Heart left ventricle (tissue), 16 donors: ENCODE measurements at regions of chr1 and their contacts with region 1.

Region 1: GRCh38 chr1:184494929-184495328 is 108.1 kb downstream of the C1orf21 start:
- DNase-seq: no peak
- ATAC-seq: no peak
- H3K4me3 ChIP-seq: no peak overlapping the region
- H3K27ac ChIP-seq: peak overlapping the region in 9 of 12 donors; percentile 65 to 88 (median 83)
- H3K4me1 ChIP-seq: peaks cover 0 to 88% (median 60%) of the 10 kb centered on the region in 12 donors
- H3K27me3 ChIP-seq: no peaks in the 10 kb centered on the region
- CTCF ChIP-seq: no peak
- POLR2A ChIP-seq: no peak

Region 2: DNA sequence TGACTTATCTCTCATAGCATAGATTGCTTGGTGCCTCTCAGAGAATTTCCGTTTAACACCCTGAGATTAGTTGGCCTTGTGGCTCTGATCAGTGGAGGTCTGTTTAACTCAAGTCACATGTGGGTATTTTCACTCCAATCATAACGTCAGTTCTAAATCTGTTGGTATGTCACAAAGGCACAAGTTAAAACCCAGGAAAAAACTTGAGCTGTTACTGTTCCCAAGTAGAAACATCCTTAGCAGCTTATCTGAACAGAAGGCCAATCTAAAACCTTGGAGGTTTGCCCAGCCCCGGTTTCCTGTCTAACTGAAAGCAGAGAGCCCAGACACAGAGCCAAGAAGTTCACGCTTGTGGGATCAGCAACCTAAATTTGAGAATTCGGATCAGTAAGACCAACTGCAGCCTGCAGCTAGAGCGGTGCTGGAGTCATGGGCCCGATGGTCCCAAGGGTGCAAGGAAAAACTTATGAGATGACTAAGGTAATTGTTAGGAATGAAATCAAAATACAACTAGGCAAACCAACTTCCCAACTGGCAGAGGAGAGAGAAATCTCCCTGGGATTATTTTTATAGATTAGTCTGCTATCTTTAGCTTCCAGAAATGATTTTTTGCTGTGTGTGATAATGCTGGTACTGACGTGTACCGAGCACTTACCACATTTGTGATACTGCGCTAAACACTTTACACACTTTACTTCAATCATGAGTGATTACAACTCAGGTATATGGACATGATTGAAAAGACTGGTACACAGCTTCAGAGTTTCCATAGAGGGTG is 198.3 kb before region 1 on chr1:
- intact Hi-C with region 1: loop called in 1 of 10 experiments (anchors 10 kb)
- DNase-seq: peak; percentile 83 to 96 (median 95)
- ATAC-seq: peak; percentile 91 to 95 (median 93)
- H3K4me3 ChIP-seq: peak overlapping the region in 7 of 12 donors; percentile 0 to 27 (median 21)
- H3K27ac ChIP-seq: peak overlapping the region; percentile 79 to 92 (median 86)
- H3K4me1 ChIP-seq: peaks cover 2 to 58% (median 39%) of the 10 kb centered on the region in 12 donors
- H3K27me3 ChIP-seq: no peaks in the 10 kb centered on the region
- CTCF ChIP-seq: no peak
- POLR2A ChIP-seq: no peak

Region 3: DNA sequence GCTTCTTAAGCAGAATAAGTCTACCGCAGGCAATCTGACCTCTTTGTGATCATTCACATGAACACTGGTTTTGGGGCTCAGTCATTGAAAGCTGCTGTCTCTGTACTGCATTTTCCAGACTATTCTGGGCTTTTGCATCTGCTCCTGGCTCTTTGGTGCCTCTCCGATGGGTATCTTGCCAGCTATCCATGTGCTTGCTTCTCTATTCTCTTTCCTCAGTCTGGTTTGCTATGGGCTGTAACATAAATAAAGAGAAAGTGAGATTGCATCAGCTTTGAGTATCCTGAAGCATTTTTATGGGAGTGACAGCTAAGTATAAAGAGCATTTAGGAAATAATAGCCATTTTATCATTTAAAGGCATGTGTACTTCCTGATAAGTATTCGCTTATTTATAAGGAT is 37.4 kb before region 1 on chr1:
- intact Hi-C with region 1: no loop called
- DNase-seq: no peak
- ATAC-seq: no peak
- H3K4me3 ChIP-seq: no peak overlapping the region
- H3K27ac ChIP-seq: no peak overlapping the region
- H3K4me1 ChIP-seq: peaks cover 4 to 86% (median 62%) of the 10 kb centered on the region in 12 donors
- H3K27me3 ChIP-seq: no peaks in the 10 kb centered on the region
- CTCF ChIP-seq: no peak
- POLR2A ChIP-seq: no peak

Region 4: GRCh38 chr1:184555665-184556641 is 61.0 kb after region 1 on chr1:
- intact Hi-C with region 1: loop called in 2 of 10 experiments (anchors 5 kb)
- DNase-seq: peak in 2 of 5 donors; percentile 20 to 38
- ATAC-seq: peak; percentile 52 to 82 (median 65)
- H3K4me3 ChIP-seq: no peak overlapping the region
- H3K27ac ChIP-seq: peak overlapping the region; percentile 26 to 82 (median 64)
- H3K4me1 ChIP-seq: peaks cover 0 to 38% (median 27%) of the 10 kb centered on the region in 12 donors
- H3K27me3 ChIP-seq: no peaks in the 10 kb centered on the region
- CTCF ChIP-seq: no peak
- POLR2A ChIP-seq: no peak